Activated CD8-positive, alpha-beta T cell treated with anti-CD3 and anti-CD28 coated beads, Interleukin-2, amount 10 ng/mL, durations not matched to agents 7 days and 5 days (primary cell): ENCODE measurements at regions of chr12 and their contacts with region 1.

Region 1: DNA sequence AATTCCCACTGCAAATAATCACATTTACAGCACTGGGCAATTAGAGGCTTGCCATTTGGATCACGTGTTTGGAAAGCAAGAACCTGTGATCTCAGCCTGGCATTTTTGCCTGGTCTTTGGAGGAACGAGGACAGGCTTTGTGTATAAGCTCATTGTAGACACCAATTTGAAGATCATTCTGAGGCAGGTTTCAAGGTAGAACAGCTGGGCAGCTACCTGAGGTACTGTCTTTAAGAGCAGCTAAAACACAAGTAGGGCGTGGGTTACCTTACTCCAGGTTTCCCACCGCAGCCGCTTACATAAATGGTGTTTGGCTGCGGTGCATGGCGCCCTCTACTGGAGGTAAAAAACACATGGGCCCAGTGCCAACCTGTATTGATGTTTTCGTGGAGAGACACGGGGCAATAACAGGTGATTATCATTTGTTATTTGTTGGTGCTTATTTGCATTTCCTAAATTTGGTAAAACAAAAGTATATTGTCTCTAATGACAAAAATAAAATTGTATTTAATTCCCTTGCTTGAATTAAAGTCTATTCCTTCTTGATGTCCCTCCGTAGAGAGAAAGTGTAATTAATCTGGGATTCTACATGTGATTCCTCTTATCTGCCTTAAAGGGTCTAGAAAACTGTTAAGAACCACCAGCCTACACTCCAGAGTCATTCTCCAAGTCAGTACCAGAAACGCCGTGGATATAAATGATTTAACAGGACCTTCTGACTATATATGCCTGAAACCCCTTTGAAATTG is 69.7 kb downstream of the SVOP start:
- DNase-seq: peak; percentile 81
- ATAC-seq: peak; percentile 92
- H3K4me3 Mint-ChIP-seq: no peak overlapping the region
- H3K27ac Mint-ChIP-seq: no peak overlapping the region
- H3K4me1 Mint-ChIP-seq: peaks cover 7% of the 10 kb centered on the region
- H3K27me3 Mint-ChIP-seq: peaks cover 23% of the 10 kb centered on the region

Region 2: DNA sequence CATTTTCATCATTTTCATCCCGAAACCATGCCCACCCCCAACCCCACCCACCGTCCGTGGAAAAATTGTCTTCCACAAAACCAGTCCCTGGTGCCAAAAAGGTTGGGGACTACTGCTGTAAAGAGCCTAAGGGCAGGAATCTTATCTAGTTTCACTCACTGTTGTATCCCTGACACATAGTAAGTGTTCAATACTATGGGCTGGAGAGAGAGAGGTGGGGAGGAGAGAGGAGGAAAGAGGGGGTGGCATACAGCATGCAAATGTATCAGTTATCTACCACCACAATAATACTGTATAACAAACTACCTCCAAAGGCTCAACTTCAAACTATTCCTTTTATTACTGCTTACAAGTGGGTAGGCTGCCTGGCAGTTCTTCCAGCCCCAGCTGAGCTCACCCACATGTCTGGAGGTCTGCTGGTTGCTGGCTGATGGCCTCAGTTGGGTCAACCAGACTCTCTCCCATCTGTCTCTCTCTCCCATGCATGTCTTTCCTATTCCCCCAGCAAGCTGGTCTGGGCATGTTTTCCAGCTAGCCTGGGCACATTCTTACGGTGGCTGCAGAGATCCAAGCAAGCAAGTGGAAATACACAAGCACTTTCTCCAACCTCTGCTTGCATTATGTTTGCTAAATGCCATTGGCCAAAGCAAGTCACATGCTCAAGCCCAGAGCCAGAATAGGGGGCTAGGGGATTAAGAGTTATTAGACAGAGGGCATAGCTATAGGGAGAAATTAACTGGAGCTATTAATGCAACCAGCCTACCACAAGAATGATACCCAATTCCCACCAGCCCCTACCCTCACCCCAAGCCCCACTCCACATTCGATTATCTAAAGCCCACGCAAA is 467.7 kb before region 1 on chr12:
- CTCF ChIA-PET with region 1: no interaction called
- POLR2A ChIA-PET with region 1: no interaction called
- DNase-seq: no peak
- ATAC-seq: no peak
- H3K4me3 Mint-ChIP-seq: no peak overlapping the region
- H3K27ac Mint-ChIP-seq: no peak overlapping the region
- H3K4me1 Mint-ChIP-seq: peaks cover 3% of the 10 kb centered on the region
- H3K27me3 Mint-ChIP-seq: peaks cover 11% of the 10 kb centered on the region

Region 3: GRCh38 chr12:108884116-108885012 is 66.8 kb before region 1 on chr12:
- CTCF ChIA-PET with region 1: interaction called, 14 read pairs
- POLR2A ChIA-PET with region 1: interaction called, 3 read pairs
- DNase-seq: peak; percentile 77
- ATAC-seq: peak; percentile 75
- H3K4me3 Mint-ChIP-seq: no peak overlapping the region
- H3K27ac Mint-ChIP-seq: no peak overlapping the region
- H3K4me1 Mint-ChIP-seq: no peaks in the 10 kb centered on the region
- H3K27me3 Mint-ChIP-seq: peaks cover 5% of the 10 kb centered on the region

Region 4: GRCh38 chr12:108939594-108939993 is 11.6 kb before region 1 on chr12:
- CTCF ChIA-PET with region 1: interaction called, 12 read pairs
- POLR2A ChIA-PET with region 1: no interaction called
- DNase-seq: peak; percentile 37
- ATAC-seq: peak; percentile 65
- H3K4me3 Mint-ChIP-seq: no peak overlapping the region
- H3K27ac Mint-ChIP-seq: no peak overlapping the region
- H3K4me1 Mint-ChIP-seq: peaks cover 4% of the 10 kb centered on the region
- H3K27me3 Mint-ChIP-seq: peaks cover 4% of the 10 kb centered on the region